ENCODE measurements at regions of chr3 and their contacts with region 1.

Region 1: GRCh38 chr3:31981206-31982181 is at the starts of genes OSBPL10 and ZNF860:
- DNase-seq: peak; percentile 72
- H3K4me3 Mint-ChIP-seq: peak within 1 kb of the TSS; percentile 88
- H3K27ac Mint-ChIP-seq: peak within 1 kb of the TSS; percentile 74
- H3K4me1 Mint-ChIP-seq: peaks cover 28% of the 10 kb centered on the region
- H3K27me3 Mint-ChIP-seq: peaks cover 19% of the 10 kb centered on the region
- total RNA-seq, gene OSBPL10: 14.5 and 14.9 TPM in 2 replicates
- total RNA-seq, gene ZNF860: 0.19 and 0.33 TPM in 2 replicates

Region 2: GRCh38 chr3:31288641-31289100 is 692.8 kb before region 1 on chr3:
- intact Hi-C with region 1: loop called (anchors 10 kb)
- DNase-seq: peak; percentile 85
- H3K4me3 Mint-ChIP-seq: peak overlapping the region; percentile 33
- H3K27ac Mint-ChIP-seq: peak overlapping the region; percentile 69
- H3K4me1 Mint-ChIP-seq: peaks cover 41% of the 10 kb centered on the region
- H3K27me3 Mint-ChIP-seq: peaks cover 2% of the 10 kb centered on the region

Region 3: DNA sequence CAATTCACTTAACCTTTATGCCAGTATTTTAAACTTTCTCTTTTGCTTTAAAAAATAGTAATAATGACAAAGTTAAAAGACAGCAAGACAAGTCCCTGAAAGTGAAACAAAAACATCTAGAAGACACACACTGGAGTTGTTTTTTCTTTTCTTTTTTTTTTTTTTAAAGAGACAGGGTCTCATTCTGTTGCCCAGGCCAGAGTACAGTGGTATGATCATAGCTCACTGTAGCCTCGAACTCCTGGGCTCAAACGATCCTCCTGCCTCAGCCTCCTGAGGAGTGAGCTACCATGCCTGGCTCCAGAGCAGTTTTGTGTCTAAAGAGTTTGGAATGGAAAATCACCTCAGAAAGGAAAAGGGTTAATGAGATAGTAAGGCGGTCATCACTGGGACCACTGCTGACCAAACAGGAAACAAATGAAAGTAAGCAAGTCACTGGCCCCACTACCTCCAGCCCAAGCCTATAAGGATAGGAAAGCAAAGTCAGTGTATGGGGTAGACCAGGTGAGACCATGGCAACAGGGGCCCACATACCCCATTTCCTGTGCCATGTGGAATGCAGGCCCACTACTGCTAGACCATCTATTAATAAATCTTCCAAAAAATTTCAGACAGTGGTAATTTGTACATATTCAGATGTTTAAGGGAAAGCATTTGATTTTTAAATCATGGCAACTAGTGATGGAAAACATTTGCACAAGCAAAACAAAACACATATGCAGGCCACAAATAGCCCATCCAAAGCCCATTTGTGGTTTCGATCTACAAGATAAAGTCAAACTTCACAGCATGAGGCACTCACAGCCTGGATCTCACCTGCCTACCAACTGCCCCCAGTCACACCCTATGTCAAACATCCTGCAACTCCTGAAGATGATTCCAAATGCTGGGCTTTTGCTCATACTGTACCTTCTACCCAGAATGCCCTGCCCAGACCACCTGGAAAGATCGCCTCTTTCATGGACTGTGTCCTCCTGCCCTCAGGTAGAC is 63.0 kb before region 1 on chr3:
- intact Hi-C with region 1: loop called (anchors 2 kb)
- DNase-seq: peak; percentile 71
- H3K4me3 Mint-ChIP-seq: peak overlapping the region; percentile 64
- H3K27ac Mint-ChIP-seq: peak overlapping the region; percentile 87
- H3K4me1 Mint-ChIP-seq: peaks cover 35% of the 10 kb centered on the region
- H3K27me3 Mint-ChIP-seq: no peaks in the 10 kb centered on the region

Region 4: DNA sequence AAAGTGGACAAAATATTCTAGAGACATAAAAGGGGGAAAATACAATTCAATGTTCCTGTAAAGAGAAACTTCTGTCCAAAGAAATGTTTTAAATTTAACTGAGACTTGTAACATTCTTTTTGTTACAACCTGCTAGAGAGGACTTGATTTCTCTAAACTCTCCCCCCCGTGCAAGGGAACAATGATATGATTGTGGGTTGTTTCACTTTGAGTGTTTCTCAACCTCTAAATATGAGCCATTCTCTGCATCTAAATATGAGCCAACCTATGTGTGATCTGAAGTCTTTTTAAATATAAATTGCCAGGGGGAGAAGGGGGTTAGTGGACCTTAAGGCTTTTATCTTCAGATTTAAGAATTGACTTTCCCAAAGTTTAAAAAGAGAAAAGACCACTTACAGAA is 14.7 kb after region 1 on chr3:
- intact Hi-C with region 1: loop called (anchors 2 kb)
- DNase-seq: no peak
- H3K4me3 Mint-ChIP-seq: no peak overlapping the region
- H3K27ac Mint-ChIP-seq: no peak overlapping the region
- H3K4me1 Mint-ChIP-seq: peaks cover 10% of the 10 kb centered on the region
- H3K27me3 Mint-ChIP-seq: peaks cover 2% of the 10 kb centered on the region

Region 5: GRCh38 chr3:32117324-32117723 is 135.8 kb after region 1 on chr3:
- intact Hi-C with region 1: loop called (anchors 1 kb)
- DNase-seq: no peak
- H3K4me3 Mint-ChIP-seq: no peak overlapping the region
- H3K27ac Mint-ChIP-seq: no peak overlapping the region
- H3K4me1 Mint-ChIP-seq: peaks cover 32% of the 10 kb centered on the region
- H3K27me3 Mint-ChIP-seq: no peaks in the 10 kb centered on the region